ENCODE measurements at regions of chr2 and their contacts with region 1.

Region 1: DNA sequence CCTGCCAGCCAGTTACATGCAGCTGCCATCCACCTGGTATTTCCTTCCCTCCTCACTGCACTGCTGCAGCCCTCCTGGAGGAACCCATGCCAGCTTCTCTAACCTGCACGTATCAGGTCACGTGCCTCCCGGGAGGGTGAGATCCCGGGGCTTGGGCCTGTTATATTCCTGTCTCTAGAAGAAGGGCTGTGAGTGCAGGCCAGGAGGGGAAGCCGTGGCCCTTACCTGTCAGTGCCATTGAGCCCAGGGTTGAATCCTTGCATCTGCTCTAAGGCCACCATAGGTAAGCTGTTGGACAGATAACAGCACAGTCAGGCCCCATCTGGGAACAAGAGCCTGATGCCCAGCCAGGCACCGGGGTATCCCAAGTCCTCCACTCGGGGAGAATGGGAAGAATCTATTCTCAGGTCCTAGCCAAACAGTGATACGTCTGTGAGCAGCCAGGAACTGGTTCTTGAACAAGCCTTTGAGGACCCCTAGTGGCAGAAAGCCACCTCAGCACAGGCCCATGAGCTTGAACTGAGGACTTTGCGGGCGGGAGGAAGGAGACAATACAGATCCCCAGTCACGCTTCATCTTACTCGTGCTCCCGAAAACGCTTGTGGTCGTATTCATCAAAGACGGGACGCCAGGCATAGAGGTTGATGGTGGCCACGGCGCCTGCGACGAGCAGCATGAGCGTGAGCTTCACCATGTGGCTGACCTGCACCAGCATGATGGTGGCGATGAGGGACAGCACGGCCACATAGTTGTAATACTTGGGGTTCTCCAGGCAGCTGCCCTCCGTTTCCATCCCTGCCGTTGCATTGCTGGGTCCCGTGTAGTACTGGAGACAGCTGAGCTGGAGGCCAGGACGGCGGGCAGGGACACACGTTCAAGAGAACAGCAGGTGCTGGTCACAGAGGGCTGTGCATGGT is 34.4 kb downstream of the CENPO start:
- DNase-seq: peak; percentile 86
- H3K4me3 ChIP-seq: no peak overlapping the region
- H3K27ac ChIP-seq: no peak overlapping the region
- H3K4me1 ChIP-seq: no peaks in the 10 kb centered on the region
- H3K27me3 ChIP-seq: no peaks in the 10 kb centered on the region
- CTCF ChIP-seq: peak; percentile 79

Region 2: DNA sequence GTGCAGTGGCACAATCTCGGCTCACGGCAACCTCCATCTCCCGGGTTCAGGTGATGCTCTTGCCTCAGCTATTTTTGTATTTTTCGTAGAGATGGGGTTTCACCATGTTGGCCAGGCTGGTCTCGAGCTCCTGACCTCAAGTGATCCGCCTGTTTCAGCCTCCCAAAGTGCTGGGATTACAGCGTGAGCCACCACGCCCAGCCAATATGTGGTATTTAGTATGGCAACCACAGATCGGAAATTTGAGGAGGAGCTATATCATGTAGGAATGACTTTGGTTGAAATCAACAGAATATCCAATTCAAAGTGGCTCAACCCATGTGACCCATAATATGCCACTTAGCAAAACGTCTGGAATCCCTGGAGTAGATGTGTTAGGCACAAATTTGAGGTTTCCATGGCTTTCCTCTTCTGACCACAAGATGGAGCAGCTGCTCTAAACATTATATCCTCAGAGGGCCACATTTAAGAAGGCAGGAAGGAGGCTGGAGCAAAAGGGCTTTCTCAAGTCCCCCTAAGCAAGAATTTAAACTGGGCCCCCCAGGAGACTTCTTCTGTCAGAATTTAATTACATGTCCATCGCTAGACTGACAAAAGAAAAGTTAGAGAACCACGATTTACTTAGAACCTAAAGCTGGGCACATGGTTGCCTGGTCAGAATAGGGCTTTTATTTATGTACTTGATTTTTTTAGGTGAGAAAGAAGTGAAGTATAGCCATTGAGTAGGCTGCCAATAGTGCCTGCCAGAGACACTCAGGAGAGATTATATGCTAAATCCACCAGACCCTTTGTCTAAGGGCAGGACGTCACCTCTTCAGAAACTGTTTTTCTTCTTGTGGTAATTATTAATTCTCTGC is 417.7 kb before region 1 on chr2:
- intact Hi-C with region 1: loop called (anchors 2 kb)
- DNase-seq: peak; percentile 47
- H3K4me3 ChIP-seq: no peak overlapping the region
- H3K27ac ChIP-seq: no peak overlapping the region
- H3K4me1 ChIP-seq: no peaks in the 10 kb centered on the region
- H3K27me3 ChIP-seq: no peaks in the 10 kb centered on the region
- CTCF ChIP-seq: peak; percentile 65

Region 3: DNA sequence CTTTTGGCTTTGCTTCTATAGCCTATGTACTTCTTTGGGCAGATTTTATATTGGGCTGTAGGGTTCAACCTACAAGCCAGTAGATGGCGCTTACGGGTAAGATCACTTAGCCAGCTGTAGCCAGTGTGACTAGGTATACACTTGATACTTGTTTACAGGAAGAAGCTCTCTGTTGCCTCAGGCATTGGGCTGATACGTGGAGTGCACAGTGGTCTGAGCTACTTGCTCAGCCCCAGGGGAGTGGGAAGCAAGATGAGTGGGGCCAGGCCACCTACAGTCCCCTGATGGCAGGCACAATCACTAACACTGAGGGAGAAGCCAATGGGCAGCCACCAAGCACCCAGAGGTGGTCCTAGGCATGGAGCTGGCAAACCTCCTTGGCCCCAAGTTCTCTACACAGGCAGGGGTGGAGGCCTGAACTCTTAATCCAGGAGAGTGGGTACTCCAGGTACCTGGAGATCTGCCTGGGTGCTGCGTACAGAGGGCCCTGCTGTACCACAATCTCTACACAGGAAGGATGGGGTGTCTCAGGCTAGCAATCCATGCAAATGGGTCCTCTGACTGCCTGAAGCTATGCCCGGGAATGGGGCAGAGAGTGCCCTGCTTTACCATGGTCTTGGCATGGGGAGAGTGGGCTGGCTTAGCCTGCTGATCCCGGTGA is 214.3 kb before region 1 on chr2:
- intact Hi-C with region 1: loop called (anchors 10 kb)
- DNase-seq: peak; percentile 18
- H3K4me3 ChIP-seq: no peak overlapping the region
- H3K27ac ChIP-seq: no peak overlapping the region
- H3K4me1 ChIP-seq: no peaks in the 10 kb centered on the region
- H3K27me3 ChIP-seq: no peaks in the 10 kb centered on the region
- CTCF ChIP-seq: no peak

Region 4: DNA sequence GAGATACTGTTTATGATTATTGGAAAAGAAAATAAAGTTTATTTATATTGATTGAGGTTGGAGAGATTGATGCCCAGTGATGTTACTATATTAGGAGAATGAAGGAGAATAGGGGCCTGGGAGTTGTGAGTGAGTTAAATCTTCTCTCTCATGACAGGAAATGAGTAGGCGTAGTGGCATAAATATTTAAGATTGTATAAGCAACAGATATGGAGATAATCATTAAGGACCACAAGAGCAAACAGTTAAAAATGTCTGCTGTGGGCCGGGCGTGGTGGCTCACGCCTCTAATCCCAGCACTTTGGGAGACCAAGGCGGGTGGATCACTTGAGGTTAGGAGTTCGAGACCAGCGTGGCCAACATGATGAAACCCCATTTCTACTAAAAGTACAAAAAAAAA is 97.1 kb before region 1 on chr2:
- intact Hi-C with region 1: no loop called
- DNase-seq: no peak
- H3K4me3 ChIP-seq: no peak overlapping the region
- H3K27ac ChIP-seq: no peak overlapping the region
- H3K4me1 ChIP-seq: no peaks in the 10 kb centered on the region
- H3K27me3 ChIP-seq: no peaks in the 10 kb centered on the region
- CTCF ChIP-seq: no peak

Region 5: GRCh38 chr2:25127646-25128045 is 300.1 kb after region 1 on chr2:
- intact Hi-C with region 1: loop called (anchors 10 kb)
- DNase-seq: no peak
- H3K4me3 ChIP-seq: no peak overlapping the region
- H3K27ac ChIP-seq: no peak overlapping the region
- H3K4me1 ChIP-seq: no peaks in the 10 kb centered on the region
- H3K27me3 ChIP-seq: peaks cover 4% of the 10 kb centered on the region
- CTCF ChIP-seq: no peak

Region 6: GRCh38 chr2:25453199-25453905 is 625.8 kb after region 1 on chr2:
- intact Hi-C with region 1: no loop called
- DNase-seq: no peak
- H3K4me3 ChIP-seq: no peak overlapping the region
- H3K27ac ChIP-seq: no peak overlapping the region
- H3K4me1 ChIP-seq: no peaks in the 10 kb centered on the region
- H3K27me3 ChIP-seq: no peaks in the 10 kb centered on the region
- CTCF ChIP-seq: no peak